Naive thymus-derived CD4-positive, alpha-beta T cell (primary cell): ENCODE measurements at regions of chr12 and their contacts with region 1.

Region 1: DNA sequence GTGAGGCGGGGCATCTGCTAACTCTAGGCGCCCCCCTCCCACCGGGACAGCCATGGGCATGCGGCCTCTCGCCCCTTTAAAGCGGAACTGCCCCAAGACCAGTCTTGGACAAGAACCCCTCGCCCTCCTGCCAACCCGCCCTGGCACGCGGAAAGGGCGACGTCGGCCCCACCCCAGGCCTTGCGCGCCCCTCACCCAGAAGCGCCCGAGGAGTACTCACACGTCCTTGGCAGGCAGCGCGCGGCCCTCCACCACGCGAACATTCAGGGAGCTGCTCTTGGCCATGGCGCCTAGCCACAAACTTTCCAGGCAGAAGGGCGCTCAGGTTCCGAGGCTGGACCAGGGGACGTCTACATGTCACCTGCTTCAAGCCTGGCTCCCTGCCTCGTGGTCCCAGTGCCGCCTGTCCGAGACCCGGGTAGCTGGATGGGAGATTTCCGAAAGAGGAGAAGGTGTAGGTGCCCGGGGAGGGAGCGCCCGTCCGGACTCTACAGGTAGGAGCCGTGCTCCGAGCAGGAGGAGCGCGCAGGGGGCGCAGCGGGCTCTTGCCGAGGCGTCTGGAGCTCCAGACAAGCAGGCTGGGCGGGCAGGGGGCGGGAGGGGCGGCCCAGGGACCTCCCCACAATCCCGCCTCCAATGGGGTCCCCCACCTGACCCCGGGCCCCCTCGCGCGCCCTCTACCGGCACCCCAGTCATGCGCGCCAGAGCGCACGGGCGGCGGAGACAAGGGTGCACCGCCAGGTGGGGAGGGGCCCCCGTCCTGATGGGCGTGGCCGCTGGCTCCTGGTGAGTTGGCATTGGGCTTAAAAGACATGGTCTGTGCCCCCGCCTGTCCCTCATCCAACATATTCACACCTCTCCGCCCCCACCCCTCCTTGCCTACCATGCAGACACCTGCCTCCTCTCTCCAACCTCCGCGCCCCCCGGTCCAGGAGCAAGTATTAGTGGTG is at the start of gene RASAL1:
- DNase-seq: peak; percentile 72 to 83 (median 80)
- ATAC-seq: peak; percentile 97
- H3K4me3 ChIP-seq: peak within 1 kb of the TSS; percentile 66
- H3K4me3 Mint-ChIP-seq: peak within 1 kb of the TSS; percentile 81 to 91 (median 86)
- H3K27ac ChIP-seq: peak within 1 kb of the TSS; percentile 59
- H3K27ac Mint-ChIP-seq: peak within 1 kb of the TSS; percentile 14 to 97 (median 92)
- H3K4me1 ChIP-seq: peaks cover 0 to 14% of the 10 kb centered on the region in 2 donors
- H3K4me1 Mint-ChIP-seq: peaks cover 9 to 25% (median 13%) of the 10 kb centered on the region in 7 donors
- H3K27me3 ChIP-seq: no peaks in the 10 kb centered on the region
- H3K27me3 Mint-ChIP-seq: peaks cover 0 to 7% (median 0%) of the 10 kb centered on the region in 5 donors
- total RNA-seq, gene RASAL1: 0.19 to 1.6 (median 1.1) TPM

Region 2: DNA sequence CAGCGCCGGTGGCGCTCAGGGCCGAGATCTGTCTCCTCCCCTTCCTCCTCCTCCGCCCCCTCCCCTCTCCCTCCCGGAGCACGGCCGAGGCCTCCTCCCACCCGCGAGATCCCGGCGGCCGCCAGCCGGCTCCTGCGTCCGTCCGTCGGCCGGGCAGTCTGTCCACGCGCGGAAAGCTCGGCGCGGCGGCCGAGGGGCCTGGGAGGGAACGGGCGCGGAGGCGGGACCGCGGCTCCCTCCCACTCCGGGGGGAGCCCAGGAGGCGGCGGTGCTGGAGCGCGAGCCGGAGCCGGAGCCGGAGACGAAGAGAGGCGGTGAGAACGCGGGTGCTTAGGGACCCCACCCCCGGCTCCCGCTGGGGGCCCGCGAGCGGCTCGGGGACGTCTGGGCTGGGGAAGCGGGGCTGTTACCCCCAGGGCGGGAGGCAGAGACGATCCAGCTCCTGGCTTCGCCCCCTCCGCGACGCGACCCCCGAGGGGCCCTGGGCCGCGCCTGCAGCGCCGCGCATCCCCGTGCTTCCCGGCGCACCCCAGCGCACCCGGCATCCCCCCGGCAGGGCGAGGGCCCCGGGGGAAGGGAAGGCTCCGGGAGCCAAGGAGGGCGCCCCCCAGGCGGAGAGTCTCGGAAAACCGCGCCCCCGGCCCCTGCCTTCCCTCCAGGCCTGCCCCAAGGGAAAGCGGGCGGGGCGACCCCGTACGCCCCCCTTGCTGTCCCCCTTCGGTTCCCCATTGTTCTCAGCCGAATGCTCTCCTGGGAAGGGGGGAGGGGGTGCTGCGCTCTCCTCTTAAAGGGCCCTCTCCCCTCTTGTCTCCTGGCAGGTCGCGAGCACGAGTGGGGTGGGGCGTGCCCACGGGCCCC is 78.6 kb before region 1 on chr12 and contains the start of gene DTX1:
- CTCF ChIA-PET with region 1: no interaction called
- POLR2A ChIA-PET with region 1: no interaction called
- intact Hi-C with region 1: loop called in 1 of 2 experiments (anchors 5 kb)
- DNase-seq: peak in 8 of 9 donors; percentile 16 to 50 (median 40)
- ATAC-seq: peak; percentile 75
- H3K4me3 ChIP-seq: peak within 1 kb of the TSS; percentile 57
- H3K4me3 Mint-ChIP-seq: peak within 1 kb of the TSS in 9 of 10 donors; percentile 36 to 91 (median 87)
- H3K27ac ChIP-seq: peak within 1 kb of the TSS; percentile 72
- H3K27ac Mint-ChIP-seq: peak within 1 kb of the TSS in 8 of 9 donors; percentile 84 to 90 (median 85)
- H3K4me1 ChIP-seq: peaks cover 4 to 48% of the 10 kb centered on the region in 2 donors
- H3K4me1 Mint-ChIP-seq: peaks cover 0 to 53% (median 37%) of the 10 kb centered on the region in 7 donors
- H3K27me3 ChIP-seq: no peaks in the 10 kb centered on the region
- H3K27me3 Mint-ChIP-seq: peaks cover 0 to 28% (median 0%) of the 10 kb centered on the region in 5 donors
- total RNA-seq, gene DTX1: 4.2 to 15.8 (median 8.8) TPM in 4 of 5 experiments, not detected in the other

Region 3: GRCh38 chr12:113207613-113208040 is 72.2 kb after region 1 on chr12:
- CTCF ChIA-PET with region 1: no interaction called
- POLR2A ChIA-PET with region 1: no interaction called
- intact Hi-C with region 1: no loop called
- DNase-seq: peak in 8 of 9 donors; percentile 24 to 47 (median 38)
- ATAC-seq: peak; percentile 23
- H3K4me3 ChIP-seq: no peak overlapping the region
- H3K4me3 Mint-ChIP-seq: peak overlapping the region; percentile 4 to 86 (median 42)
- H3K27ac ChIP-seq: peak overlapping the region; percentile 64
- H3K27ac Mint-ChIP-seq: peak overlapping the region; percentile 82 to 97 (median 90)
- H3K4me1 ChIP-seq: peaks cover 38 to 45% of the 10 kb centered on the region in 2 donors
- H3K4me1 Mint-ChIP-seq: peaks cover 28 to 60% (median 51%) of the 10 kb centered on the region in 7 donors
- H3K27me3 ChIP-seq: no peaks in the 10 kb centered on the region
- H3K27me3 Mint-ChIP-seq: no peaks in the 10 kb centered on the region